ENCODE measurements at regions of chr17 and their contacts with region 1.

Region 1: DNA sequence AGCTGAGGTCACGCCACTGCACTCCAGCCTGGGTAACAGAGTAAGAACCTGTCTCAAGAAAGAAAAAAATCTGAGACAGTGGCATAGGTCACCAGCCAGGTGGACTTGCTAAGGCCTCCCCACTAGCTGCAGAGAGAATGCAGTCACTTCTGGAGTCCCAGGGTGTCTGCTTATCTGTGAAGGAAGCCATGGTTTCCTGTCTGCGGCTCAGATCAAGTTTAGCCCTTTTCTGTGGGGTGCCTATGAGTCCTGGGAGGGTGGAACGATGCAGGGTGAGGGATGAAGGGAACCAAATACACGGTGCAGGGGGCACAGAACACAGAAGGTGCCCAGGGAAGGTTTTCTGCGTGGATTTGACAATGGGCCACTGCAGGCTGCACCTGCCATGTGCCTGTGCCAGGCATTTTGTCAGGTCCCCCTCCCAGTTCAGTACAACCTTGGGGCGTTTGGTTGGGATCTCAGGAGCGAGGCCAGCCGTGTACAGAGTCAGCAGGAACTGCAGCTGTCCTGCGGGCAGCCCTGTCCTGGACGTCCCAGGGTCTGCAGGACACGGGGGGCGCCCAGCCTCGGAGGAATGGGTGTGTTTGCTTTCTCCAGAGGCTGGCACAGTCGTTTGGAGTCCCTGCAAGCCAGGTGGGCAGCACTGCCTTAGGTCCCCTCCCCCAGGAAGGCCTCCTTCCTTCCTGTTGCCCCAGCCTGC is 41.8 kb downstream of the RAB11FIP4 start:
- DNase-seq: no peak
- H3K4me3 ChIP-seq: no peak overlapping the region
- H3K27ac ChIP-seq: no peak overlapping the region
- H3K4me1 ChIP-seq: no peaks in the 10 kb centered on the region
- H3K27me3 ChIP-seq: peaks cover 0 to 11% of the 10 kb centered on the region in 2 donors
- CTCF ChIP-seq: no peak
- POLR2A ChIP-seq: no peak

Region 2: DNA sequence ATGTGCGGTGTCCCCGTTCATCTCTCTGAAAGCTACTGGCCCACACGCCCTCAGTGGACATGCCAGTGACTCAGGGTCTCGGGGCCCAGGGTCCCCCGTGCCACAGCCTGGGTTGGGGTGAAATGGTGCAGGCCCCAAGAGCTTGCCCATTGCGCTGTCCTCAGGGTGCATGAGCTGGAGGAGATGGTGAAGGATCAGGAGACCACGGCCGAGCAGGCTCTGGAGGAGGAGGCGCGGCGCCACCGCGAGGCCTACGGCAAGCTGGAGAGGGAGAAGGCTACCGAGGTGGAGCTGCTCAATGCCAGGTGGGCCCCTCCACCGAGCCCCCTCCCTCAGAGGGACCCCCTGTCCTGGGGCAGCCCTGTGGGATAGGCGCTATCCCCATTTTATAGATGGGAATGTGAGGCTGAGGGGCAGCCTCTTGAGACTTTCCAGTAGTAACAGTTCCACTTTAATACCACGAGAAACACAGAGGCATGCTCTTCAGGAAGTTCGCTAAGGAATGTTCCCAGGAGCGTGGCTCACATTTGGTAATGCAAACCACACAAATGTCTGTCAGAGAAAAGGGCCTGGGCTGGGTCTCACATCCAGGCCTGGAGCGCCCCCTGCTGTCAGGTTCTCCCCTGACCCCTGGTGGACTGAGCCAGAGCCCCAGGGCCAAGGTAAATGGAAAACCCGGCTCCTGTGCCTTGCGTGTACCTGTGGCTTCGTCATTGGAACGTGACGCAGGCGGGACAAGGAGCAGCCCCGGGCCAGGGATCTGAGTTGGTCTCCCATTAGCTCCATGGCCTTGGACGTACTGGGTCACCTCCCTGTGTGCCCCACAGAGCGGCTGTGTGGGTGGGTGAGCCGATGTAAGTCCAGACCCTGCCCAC is 91.9 kb after region 1 on chr17:
- intact Hi-C with region 1: loop called (anchors 10 kb)
- DNase-seq: peak; percentile 82 to 95
- H3K4me3 ChIP-seq: no peak overlapping the region
- H3K27ac ChIP-seq: no peak overlapping the region
- H3K4me1 ChIP-seq: no peaks in the 10 kb centered on the region
- H3K27me3 ChIP-seq: no peaks in the 10 kb centered on the region
- CTCF ChIP-seq: peak; percentile 56 to 94 (median 91)
- POLR2A ChIP-seq: no peak